Dendritic cell treated with granulocyte-macrophage colony-stimulating factor and Interleukin-4, amounts not matched to agents 40 ng/mL and 50 ng/mL, for 4 days (primary cell): ENCODE measurements at regions of chr4 and their contacts with region 1.

Region 1: DNA sequence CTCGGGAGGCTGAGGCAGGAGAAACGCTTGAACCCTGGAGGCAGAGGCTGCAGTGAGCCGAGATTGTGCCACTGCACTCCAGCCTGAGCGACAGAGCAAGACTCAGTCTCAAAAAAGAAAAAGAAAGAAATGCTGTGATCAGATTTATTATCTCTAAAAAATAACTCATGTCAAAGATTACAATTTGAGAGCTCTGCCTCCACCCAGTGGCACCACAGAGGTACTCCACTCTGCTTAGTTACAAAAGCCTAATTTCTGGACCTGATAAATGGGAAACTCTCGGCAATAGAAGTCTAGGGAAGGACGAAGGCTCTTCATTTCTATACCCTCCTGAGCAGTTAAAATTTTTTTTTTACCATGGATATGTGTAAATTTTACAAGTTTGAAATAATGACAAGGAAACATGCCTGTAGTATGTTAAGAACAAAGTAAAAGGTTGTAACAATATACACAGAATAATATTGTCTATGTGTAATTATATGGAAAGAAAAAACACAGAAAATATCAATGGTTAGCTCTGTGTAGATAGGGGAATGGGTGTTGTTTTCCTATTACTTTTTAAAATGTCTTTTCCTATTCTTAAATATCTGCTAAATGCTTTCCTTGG is 149.8 kb downstream of the STIM2 start:
- H3K4me3 Mint-ChIP-seq: no peak overlapping the region
- H3K27ac Mint-ChIP-seq: no peak overlapping the region
- H3K4me1 Mint-ChIP-seq: no peaks in the 10 kb centered on the region
- H3K27me3 Mint-ChIP-seq: no peaks in the 10 kb centered on the region

Region 2: GRCh38 chr4:26459054-26459755 is 551.2 kb before region 1 on chr4:
- intact Hi-C with region 1: loop called (anchors 2 kb)
- H3K4me3 Mint-ChIP-seq: no peak overlapping the region
- H3K27ac Mint-ChIP-seq: no peak overlapping the region
- H3K4me1 Mint-ChIP-seq: peaks cover 5% of the 10 kb centered on the region
- H3K27me3 Mint-ChIP-seq: peaks cover 2% of the 10 kb centered on the region

Region 3: DNA sequence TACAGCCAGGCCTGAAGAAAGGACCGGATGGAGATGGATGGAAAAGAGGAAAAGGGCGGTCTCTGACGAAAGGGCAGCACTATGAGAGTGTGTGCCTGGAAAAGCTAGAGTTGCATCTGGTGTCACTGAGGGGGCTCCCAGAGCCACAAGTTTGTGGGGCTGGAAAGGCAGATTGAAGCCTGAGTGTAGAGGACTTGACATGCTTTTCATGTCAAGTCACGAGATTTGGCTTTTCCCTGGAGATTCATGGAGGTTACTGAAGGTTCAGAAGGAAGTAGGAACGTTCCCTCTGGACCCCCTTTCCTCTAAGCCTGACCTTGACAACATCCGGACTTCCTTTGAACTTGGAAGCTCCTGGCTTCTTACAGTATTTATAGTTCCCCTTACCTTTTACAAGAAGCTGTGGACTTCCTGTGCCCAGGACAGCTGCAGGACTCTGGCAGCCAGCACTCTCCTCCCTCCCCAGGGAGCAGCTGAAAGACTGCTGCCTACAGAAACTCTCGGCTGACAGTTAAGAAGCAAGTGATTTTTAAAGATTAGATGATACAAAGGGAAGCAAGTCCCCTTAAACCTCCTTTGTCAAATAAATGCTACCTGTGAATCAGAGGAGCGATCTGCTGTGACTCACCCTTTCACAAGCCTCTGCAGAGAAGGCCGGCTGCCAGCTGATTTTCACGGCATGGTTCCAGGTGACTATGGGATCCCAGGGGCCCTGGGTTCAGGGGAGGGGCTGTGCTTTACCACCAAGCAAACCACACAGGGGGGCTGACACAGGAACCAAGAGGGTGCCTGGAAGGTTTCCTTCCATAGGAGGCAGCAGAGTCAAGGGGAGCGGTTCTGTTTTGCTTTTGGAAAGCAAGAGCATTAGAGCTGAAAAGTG is 222.7 kb before region 1 on chr4:
- intact Hi-C with region 1: loop called (anchors 2 kb)
- H3K4me3 Mint-ChIP-seq: no peak overlapping the region
- H3K27ac Mint-ChIP-seq: no peak overlapping the region
- H3K4me1 Mint-ChIP-seq: peaks cover 32% of the 10 kb centered on the region
- H3K27me3 Mint-ChIP-seq: peaks cover 7% of the 10 kb centered on the region

Region 4: GRCh38 chr4:27024805-27025204 is 14.4 kb after region 1 on chr4:
- intact Hi-C with region 1: no loop called
- H3K4me3 Mint-ChIP-seq: no peak overlapping the region
- H3K27ac Mint-ChIP-seq: no peak overlapping the region
- H3K4me1 Mint-ChIP-seq: no peaks in the 10 kb centered on the region
- H3K27me3 Mint-ChIP-seq: peaks cover 1% of the 10 kb centered on the region